Endothelial cell of umbilical vein (primary cell): ENCODE measurements at regions of chr5 and their contacts with region 1.

Region 1: DNA sequence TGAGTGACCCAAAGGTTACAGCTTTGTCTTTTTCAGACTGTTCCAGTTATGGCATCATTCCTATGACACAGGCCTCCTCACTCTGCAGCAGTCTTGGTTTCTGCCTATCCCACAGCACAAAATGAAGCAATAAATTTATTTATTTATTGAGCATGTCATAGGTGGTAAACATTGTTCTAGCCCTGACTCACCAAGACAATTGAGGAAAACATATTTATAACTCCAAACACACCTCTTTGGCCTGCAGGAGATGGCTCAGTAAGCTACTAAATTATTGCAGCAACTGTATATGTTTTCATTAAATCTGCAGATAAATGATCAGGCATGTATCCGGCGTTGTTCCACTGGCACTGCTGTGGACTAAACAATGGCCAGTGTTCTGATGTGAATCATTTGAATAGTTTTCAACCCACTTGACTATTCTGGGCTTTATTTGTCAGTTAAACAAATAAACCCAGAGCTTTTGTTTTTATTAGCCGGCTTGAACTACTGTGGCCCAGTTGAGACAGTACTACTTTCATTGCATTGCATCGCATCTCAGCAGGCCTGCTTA is 83.2 kb downstream of the FOXD1 start:
- DNase-seq: peak; percentile 70
- H3K4me3 ChIP-seq: no peak overlapping the region
- H3K27ac ChIP-seq: peak overlapping the region; percentile 40
- H3K4me1 ChIP-seq: peaks cover 25% of the 10 kb centered on the region
- H3K27me3 ChIP-seq: peaks cover 11 to 17% of the 10 kb centered on the region in 2 experiments
- CTCF ChIP-seq: no peak
- POLR2A ChIP-seq: no peak

Region 2: GRCh38 chr5:73354406-73354805 is 11.0 kb before region 1 on chr5:
- CTCF ChIA-PET with region 1: interaction called, 17 read pairs
- POLR2A ChIA-PET with region 1: no interaction called
- dilution Hi-C with region 1: no loop called
- intact Hi-C with region 1: no loop called
- DNase-seq: no peak
- H3K4me3 ChIP-seq: no peak overlapping the region
- H3K27ac ChIP-seq: no peak overlapping the region
- H3K4me1 ChIP-seq: no peaks in the 10 kb centered on the region
- H3K27me3 ChIP-seq: peaks cover 46 to 74% of the 10 kb centered on the region in 2 experiments
- CTCF ChIP-seq: no peak
- POLR2A ChIP-seq: no peak

Region 3: GRCh38 chr5:73381590-73382400 is 16.4 kb after region 1 on chr5:
- CTCF ChIA-PET with region 1: no interaction called
- POLR2A ChIA-PET with region 1: no interaction called
- dilution Hi-C with region 1: no loop called
- intact Hi-C with region 1: no loop called
- DNase-seq: no peak
- H3K4me3 ChIP-seq: no peak overlapping the region
- H3K27ac ChIP-seq: no peak overlapping the region
- H3K4me1 ChIP-seq: peaks cover 10% of the 10 kb centered on the region
- H3K27me3 ChIP-seq: peaks cover 52 to 81% of the 10 kb centered on the region in 2 experiments
- CTCF ChIP-seq: no peak
- POLR2A ChIP-seq: no peak